PC-3 (cell line): ENCODE measurements at regions of chr1 and their contacts with region 1.

Region 1: DNA sequence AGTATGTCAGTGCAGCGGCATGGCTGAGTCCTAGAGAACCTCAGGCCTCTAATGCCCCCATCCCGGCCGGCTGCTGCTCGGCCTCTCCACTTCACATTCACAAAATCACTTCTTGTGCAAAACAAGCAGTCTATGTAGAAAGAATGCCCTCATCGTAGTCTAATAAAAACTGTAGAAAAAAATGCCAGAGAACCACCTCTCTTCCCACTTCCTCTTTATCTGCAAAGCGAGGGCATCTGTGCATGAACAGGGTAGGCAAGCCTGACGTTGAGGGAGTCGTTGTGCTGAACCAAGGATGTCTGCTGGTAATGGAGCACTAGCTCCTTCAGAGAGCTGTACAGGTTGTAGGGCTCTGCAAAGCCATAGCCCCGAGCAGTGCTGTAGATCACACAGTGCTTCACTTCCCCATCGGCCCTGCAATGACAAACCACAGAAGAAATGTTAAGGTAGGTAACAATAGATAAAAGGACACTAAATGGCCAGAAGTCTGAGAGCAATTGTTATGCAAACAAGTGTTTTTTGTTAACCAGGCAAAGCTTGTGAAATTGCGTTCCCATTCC is 88.9 kb downstream of the PIK3R3 start:
- DNase-seq: no peak
- ATAC-seq: no peak
- H3K4me3 ChIP-seq: no peak overlapping the region
- H3K27ac ChIP-seq: no peak overlapping the region
- H3K4me1 ChIP-seq: peaks cover 17% of the 10 kb centered on the region
- H3K27me3 ChIP-seq: no peaks in the 10 kb centered on the region
- CTCF ChIP-seq: no peak

Region 2: GRCh38 chr1:45913183-45913683 is 130.3 kb before region 1 on chr1:
- CTCF ChIA-PET with region 1: no interaction called
- POLR2A ChIA-PET with region 1: no interaction called
- intact Hi-C with region 1: no loop called
- DNase-seq: no peak
- ATAC-seq: no peak
- H3K4me3 ChIP-seq: no peak overlapping the region
- H3K27ac ChIP-seq: no peak overlapping the region
- H3K4me1 ChIP-seq: no peaks in the 10 kb centered on the region
- H3K27me3 ChIP-seq: no peaks in the 10 kb centered on the region
- CTCF ChIP-seq: no peak

Region 3: DNA sequence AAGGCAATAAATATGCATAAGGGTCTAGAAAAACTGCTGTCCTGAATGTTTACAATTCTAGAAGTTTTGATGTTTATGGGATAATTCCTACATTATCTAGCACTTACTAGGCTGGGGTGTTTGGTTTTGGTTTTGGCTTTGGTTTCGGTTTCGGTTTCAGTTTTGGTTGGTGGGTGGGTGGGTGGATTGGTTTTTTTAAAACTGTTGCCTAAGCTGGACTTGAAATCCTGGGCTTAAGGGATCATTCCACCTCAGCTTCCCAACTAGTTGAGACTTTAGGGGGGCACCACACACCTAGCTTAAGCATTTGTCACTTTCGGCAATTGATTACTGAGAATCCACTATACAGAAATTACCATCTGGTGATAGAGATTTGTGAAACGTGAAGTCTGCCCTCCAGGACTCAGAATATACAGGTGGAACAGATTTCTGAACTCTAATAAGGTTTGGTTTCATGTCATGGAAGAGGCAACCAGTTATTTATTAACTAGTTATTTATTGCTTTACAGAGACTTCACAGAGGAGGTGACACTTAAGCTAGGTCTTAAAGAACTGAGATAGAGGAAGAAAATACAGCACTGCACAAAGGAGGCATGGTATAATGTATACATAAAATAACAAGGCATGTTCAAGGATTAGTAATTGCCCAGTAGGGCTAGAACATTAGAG is 19.2 kb after region 1 on chr1:
- CTCF ChIA-PET with region 1: no interaction called
- POLR2A ChIA-PET with region 1: no interaction called
- intact Hi-C with region 1: no loop called
- DNase-seq: no peak
- ATAC-seq: no peak
- H3K4me3 ChIP-seq: no peak overlapping the region
- H3K27ac ChIP-seq: no peak overlapping the region
- H3K4me1 ChIP-seq: no peaks in the 10 kb centered on the region
- H3K27me3 ChIP-seq: no peaks in the 10 kb centered on the region
- CTCF ChIP-seq: no peak

Region 4: GRCh38 chr1:46076343-46076742 is 32.8 kb after region 1 on chr1:
- CTCF ChIA-PET with region 1: no interaction called
- POLR2A ChIA-PET with region 1: no interaction called
- intact Hi-C with region 1: loop called (anchors 1 kb)
- DNase-seq: no peak
- ATAC-seq: no peak
- H3K4me3 ChIP-seq: no peak overlapping the region
- H3K27ac ChIP-seq: no peak overlapping the region
- H3K4me1 ChIP-seq: no peaks in the 10 kb centered on the region
- H3K27me3 ChIP-seq: no peaks in the 10 kb centered on the region
- CTCF ChIP-seq: no peak